ENCODE measurements at regions of chr1 and their contacts with region 1.

Region 1: DNA sequence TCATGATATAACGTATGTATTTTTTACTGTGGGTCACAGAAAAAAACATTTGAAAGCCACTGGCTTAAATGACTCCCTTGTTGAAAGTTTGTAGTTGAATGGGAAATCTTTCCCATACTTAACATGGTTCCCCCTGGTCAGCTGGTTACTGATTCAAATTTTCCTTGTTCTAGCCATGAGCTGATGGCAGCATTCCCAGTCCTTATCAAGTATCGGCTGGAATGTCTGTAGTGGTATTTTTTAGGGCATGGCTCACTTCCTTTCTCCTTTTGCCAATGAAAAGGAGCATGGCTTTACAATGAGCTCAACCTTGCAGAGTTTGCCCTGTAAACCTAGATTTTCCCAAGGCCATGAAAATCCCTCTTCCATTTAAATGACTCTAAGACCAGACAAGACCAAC is 55.7 kb downstream of the GIPC2 start:
- DNase-seq: peak in 1 of 2 donors; percentile 80
- ATAC-seq: peak; percentile 77 to 96 (median 90)
- H3K4me3 ChIP-seq: no peak overlapping the region
- H3K27ac ChIP-seq: peak overlapping the region in 9 of 10 donors; percentile 3 to 79 (median 66)
- H3K4me1 ChIP-seq: peaks cover 0 to 53% (median 33%) of the 10 kb centered on the region in 9 donors
- H3K27me3 ChIP-seq: no peaks in the 10 kb centered on the region
- CTCF ChIP-seq: no peak

Region 2: DNA sequence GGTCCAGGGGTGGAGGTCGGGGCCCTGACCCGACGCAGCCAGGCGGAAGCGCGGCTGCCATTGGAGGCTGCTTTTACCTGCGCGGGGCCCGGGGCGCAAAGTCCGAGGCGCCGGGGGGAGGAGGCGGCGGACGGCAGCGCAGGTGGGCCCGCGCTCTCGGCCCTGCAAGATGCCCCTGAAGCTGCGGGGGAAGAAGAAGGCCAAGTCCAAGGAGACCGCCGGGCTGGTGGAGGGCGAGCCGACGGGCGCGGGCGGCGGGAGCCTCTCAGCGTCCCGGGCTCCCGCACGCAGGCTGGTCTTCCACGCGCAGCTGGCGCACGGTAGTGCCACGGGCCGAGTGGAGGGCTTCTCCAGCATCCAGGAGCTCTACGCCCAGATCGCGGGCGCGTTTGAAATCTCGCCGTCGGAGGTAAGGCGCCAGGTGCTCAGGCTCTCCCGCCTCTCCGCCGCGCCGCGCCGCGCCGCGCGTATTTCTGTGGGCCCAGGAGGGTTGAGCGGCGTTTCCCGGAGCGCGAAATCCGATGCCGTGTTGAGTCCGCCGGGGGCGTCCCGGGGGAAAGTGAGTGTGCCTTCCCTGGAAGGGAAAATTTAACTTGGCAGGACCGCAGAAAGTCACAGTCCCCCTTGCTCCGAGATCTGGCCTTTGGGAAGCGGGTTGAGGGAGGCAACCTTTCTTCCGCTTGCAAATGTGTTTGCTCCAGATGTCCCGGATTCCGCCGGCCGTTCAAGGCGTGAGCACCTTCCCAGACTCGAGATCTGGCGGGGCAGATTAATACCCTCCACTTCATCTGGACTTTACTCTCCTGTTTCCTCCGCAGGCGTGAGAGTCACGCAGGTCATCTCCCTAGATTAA is 55.4 kb before region 1 on chr1 and contains the start of gene GIPC2:
- intact Hi-C with region 1: loop called in 4 of 10 experiments (anchors 5 to 10 kb)
- DNase-seq: peak; percentile 24 to 49
- ATAC-seq: peak; percentile 60 to 79 (median 68)
- H3K4me3 ChIP-seq: peak within 1 kb of the TSS; percentile 64 to 93 (median 77)
- H3K27ac ChIP-seq: peak within 1 kb of the TSS in 9 of 10 donors; percentile 64 to 88 (median 81)
- H3K4me1 ChIP-seq: peaks cover 0 to 55% (median 32%) of the 10 kb centered on the region in 9 donors
- H3K27me3 ChIP-seq: peaks cover 0 to 38% (median 0%) of the 10 kb centered on the region in 7 donors
- CTCF ChIP-seq: no peak
- total RNA-seq, gene GIPC2: 1.3 to 7.4 (median 3.7) TPM

Region 3: DNA sequence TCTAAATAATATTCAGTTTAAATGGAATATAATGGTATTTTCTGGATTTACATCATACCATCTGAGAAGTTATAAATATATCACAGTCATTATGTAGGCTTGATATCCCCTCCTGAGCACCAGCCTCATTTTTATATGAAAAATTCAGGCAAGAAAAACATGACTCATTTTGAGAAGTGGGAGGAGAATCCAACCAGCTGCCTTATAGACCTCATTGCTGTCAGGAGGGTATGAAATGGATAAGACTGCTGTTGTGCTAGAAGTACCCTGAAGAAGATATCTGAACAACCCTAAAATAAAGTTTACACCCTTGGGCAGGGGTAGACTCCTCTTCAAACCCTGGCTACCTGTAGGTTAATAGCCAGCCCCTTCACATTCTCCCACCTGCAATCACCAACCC is 47.0 kb before region 1 on chr1:
- intact Hi-C with region 1: loop called in 4 of 10 experiments (anchors 5 to 10 kb)
- DNase-seq: no peak
- ATAC-seq: no peak
- H3K4me3 ChIP-seq: no peak overlapping the region
- H3K27ac ChIP-seq: peak overlapping the region in 1 of 10 donors; percentile 63
- H3K4me1 ChIP-seq: peaks cover 2 to 41% (median 18%) of the 10 kb centered on the region in 9 donors
- H3K27me3 ChIP-seq: no peaks in the 10 kb centered on the region
- CTCF ChIP-seq: no peak

Region 4: GRCh38 chr1:78377356-78377928 is 275.9 kb after region 1 on chr1:
- intact Hi-C with region 1: no loop called
- DNase-seq: no peak
- ATAC-seq: no peak
- H3K4me3 ChIP-seq: no peak overlapping the region
- H3K27ac ChIP-seq: no peak overlapping the region
- H3K4me1 ChIP-seq: no peaks in the 10 kb centered on the region
- H3K27me3 ChIP-seq: no peaks in the 10 kb centered on the region
- CTCF ChIP-seq: no peak

Measured in heart right ventricle (tissue), 16 donors.